GM10248 (cell line): ENCODE measurements at regions of chr6 and their contacts with region 1.

Region 1: DNA sequence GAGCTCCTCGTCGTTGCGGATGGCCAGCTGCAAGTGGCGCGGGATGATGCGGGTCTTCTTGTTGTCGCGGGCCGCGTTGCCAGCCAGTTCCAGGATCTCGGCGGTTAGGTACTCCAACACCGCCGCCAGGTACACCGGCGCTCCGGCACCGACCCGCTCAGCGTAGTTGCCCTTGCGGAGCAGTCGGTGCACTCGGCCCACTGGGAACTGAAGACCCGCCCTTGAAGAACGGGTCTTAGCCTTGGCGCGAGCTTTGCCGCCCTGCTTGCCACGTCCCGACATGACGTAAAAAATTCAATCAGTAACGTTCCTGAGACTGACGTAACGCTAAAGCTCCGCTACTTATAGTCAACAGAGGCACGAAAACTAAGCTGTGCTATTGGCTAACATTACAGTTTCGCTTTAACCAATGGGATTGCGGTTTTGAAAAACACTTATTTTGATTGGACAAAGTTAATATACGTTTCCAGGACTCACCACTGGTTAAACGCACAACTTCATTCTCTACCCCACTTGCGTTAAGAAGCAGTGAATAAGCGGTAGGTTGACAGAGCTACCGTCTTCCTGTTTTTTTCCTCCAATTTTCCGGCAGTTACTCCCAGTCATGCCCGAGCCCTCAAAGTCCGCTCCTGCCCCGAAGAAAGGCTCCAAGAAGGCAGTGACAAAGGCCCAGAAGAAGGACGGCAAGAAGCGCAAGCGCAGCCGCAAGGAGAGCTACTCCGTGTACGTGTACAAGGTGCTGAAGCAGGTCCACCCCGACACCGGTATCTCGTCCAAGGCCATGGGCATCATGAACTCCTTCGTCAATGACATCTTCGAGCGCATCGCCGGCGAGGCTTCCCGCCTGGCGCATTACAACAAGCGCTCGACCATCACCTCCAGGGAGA is 73.9 kb downstream of the OR2B2 start:
- DNase-seq: peak; percentile 89
- CTCF ChIP-seq: no peak

Region 2: GRCh38 chr6:27031302-27031701 is 807.0 kb before region 1 on chr6:
- CTCF ChIA-PET with region 1: no interaction called
- POLR2A ChIA-PET with region 1: no interaction called
- DNase-seq: no peak
- CTCF ChIP-seq: no peak

Region 3: GRCh38 chr6:27766405-27766804 is 71.9 kb before region 1 on chr6:
- CTCF ChIA-PET with region 1: no interaction called
- POLR2A ChIA-PET with region 1: no interaction called
- DNase-seq: no peak
- CTCF ChIP-seq: no peak

Region 4: GRCh38 chr6:27864906-27865849 is 26.9 kb after region 1 on chr6:
- CTCF ChIA-PET with region 1: interaction called, 79 read pairs
- POLR2A ChIA-PET with region 1: interaction called, 168 read pairs
- DNase-seq: peak; percentile 89
- CTCF ChIP-seq: no peak

Region 5: GRCh38 chr6:27871924-27872638 is 33.8 kb after region 1 on chr6:
- CTCF ChIA-PET with region 1: interaction called, 79 read pairs
- POLR2A ChIA-PET with region 1: interaction called, 168 read pairs
- DNase-seq: peak; percentile 86
- CTCF ChIP-seq: peak; percentile 56